ENCODE measurements at regions of chr1 and their contacts with region 1.

Region 1: GRCh38 chr1:167936068-167936929 is at the start of gene DCAF6:
- DNase-seq: peak; percentile 99
- H3K4me3 ChIP-seq: peak within 1 kb of the TSS; percentile 90
- H3K27ac ChIP-seq: peak within 1 kb of the TSS; percentile 89
- H3K4me1 ChIP-seq: peaks cover 22% of the 10 kb centered on the region
- CTCF ChIP-seq: no peak
- total RNA-seq, gene DCAF6: 23.2 and 25.4 TPM in 2 replicates

Region 2: DNA sequence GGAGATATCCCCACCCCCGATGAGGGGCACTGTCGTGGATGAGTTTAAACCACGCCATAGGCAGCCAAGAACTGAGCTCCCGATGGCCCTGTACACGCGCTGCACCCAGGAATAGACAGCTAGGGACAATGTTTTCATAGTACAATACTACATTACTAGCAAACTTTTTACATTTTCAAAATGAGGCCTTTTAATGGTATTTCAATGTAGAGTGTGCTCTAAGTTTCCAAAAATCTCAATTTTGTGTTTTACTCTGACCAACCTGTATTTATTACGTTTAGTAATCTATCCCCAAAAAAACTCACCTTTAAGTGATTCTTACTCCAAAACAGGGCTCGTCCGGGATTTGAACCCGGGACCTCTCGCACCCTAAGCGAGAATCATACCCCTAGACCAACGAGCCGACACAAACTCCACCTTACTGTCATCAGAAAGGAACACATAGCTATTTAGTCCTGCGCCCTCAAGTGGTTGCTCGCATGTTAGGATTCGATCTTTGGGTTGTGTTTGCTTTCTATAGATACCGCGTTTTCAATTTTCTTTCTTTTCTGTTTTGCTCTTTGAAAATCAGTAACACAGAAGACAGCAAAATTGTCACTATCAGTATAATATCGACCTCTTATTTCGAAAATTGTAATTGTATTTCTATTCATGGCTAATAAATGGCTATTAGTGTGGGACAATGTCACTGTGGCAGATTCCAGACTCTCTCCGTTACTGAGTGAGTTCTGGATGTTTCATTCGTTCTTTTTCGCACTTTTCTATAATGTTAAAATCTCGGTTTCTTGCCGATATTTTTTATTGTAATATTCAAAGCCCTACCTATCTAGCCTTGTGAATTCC is 220.9 kb before region 1 on chr1:
- CTCF ChIA-PET with region 1: no interaction called
- POLR2A ChIA-PET with region 1: interaction called, 7 read pairs
- intact Hi-C with region 1: loop called (anchors 2 kb)
- DNase-seq: peak; percentile 94
- H3K4me3 ChIP-seq: peak overlapping the region; percentile 75
- H3K27ac ChIP-seq: peak overlapping the region; percentile 73
- H3K4me1 ChIP-seq: peaks cover 47% of the 10 kb centered on the region
- CTCF ChIP-seq: peak; percentile 94

Region 3: DNA sequence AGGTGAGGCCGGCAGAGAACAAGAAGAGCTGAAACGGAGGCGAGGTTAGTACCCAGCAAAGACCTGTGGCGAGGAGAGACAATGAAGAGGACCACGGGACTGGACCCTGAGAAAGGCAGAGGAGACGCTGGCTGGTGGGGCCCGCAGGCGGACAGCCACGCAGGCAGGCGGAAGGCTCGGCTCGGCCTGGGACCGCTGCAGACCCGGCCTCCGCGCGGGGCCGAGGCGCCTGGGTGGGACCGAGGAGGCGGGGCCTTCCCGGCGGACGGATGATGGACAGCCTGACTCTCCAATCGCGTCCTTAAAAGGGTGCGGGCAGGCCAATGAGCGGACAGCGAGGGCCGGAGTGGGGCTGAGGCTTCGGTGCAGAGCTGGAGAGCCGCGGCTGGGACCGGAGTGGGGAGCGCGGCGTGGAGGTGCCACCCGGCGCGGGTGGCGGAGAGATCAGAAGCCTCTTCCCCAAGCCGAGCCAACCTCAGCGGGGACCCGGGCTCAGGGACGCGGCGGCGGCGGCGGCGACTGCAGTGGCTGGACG is 214.6 kb before region 1 on chr1 and contains the start of gene MPZL1:
- CTCF ChIA-PET with region 1: no interaction called
- POLR2A ChIA-PET with region 1: interaction called, 7 read pairs
- intact Hi-C with region 1: loop called (anchors 2 kb)
- DNase-seq: peak; percentile 95
- H3K4me3 ChIP-seq: peak within 1 kb of the TSS; percentile 94
- H3K27ac ChIP-seq: peak within 1 kb of the TSS; percentile 78
- H3K4me1 ChIP-seq: peaks cover 78% of the 10 kb centered on the region
- CTCF ChIP-seq: no peak
- total RNA-seq, gene MPZL1: 36.2 and 48.9 TPM in 2 replicates

Region 4: GRCh38 chr1:167881069-167881468 is 55.2 kb before region 1 on chr1:
- CTCF ChIA-PET with region 1: no interaction called
- POLR2A ChIA-PET with region 1: no interaction called
- intact Hi-C with region 1: no loop called
- DNase-seq: no peak
- H3K4me3 ChIP-seq: no peak overlapping the region
- H3K27ac ChIP-seq: no peak overlapping the region
- H3K4me1 ChIP-seq: no peaks in the 10 kb centered on the region
- CTCF ChIP-seq: no peak

Region 5: DNA sequence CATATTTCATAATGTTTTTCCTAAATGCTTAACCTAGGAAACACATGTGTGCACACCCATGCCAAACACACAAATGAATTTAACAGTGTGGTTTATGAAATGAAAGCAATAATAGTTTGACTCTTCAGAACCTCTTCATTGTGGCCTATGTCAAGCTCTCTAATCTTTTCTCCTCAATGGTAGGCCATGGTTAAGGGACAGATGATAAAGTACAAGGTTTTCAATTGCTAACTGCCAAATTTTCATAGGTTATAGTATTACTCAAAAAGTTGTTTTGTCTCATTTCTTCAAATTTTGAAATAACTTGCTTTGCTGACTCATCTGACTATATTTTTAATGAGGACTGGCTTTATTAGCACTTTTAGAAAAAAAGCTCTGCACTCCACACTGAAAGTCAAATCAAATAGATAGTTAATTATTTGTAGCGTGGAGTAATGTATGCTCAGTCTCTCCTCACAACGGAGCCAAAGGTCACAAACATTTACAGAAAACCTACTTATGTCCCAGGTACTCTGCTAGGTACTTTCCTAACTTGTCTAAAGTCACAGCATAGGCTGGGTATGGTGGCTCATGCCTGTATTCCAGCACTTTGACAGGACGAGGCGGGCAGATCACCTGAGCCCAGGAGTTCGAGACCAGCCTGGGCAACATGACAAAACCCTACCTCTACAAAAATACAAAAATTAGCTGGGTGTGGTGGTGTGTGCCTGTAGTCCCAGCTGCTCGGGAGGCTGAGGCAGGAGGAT is 19.4 kb before region 1 on chr1:
- CTCF ChIA-PET with region 1: interaction called, 3 read pairs
- POLR2A ChIA-PET with region 1: interaction called, 12 read pairs
- intact Hi-C with region 1: no loop called
- DNase-seq: no peak
- H3K4me3 ChIP-seq: no peak overlapping the region
- H3K27ac ChIP-seq: no peak overlapping the region
- H3K4me1 ChIP-seq: no peaks in the 10 kb centered on the region
- CTCF ChIP-seq: no peak

Region 6: DNA sequence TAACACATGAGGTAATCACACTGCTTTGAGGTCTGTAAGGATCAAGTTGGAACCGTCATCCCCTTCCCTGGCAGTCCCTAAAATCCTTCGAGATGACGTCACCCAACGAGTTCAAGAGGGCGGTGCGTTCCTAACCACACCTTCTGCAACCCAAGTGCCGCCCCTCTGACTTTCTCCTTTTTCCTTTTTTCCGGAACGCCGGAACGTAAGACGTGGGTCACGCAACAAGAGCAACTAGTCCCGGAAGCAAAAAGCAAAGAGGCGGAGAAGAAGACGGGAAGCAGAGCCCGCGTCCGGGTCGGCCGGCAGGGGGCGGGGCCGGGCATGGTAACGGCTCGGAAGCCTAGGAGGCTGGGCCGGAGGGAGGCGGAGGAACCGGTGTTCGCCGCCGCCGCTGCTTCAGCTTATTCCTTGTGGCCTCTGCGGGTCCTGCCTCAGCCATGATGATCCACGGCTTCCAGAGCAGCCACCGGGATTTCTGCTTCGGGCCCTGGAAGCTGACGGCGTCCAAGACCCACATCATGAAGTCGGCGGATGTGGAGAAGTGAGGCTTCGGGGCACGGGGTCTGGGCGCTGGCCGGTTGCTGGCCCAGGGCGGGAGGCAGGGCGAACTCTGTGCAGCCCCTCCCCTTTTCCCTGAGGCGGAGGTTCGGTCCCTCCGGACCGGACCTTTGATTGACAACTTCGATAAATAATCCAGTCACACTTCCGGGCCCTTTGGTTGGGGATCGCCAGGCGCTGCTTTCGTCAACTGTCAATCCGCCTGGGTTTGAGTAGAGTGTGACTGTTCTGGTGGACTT is 242.5 kb after region 1 on chr1 and contains the start of gene TIPRL:
- CTCF ChIA-PET with region 1: no interaction called
- POLR2A ChIA-PET with region 1: no interaction called
- intact Hi-C with region 1: loop called (anchors 2 kb)
- DNase-seq: peak; percentile 95
- H3K4me3 ChIP-seq: peak within 1 kb of the TSS; percentile 82
- H3K27ac ChIP-seq: peak within 1 kb of the TSS; percentile 76
- H3K4me1 ChIP-seq: peaks cover 20% of the 10 kb centered on the region
- CTCF ChIP-seq: peak; percentile 51; the same call in 1 of the 2 replicates
- total RNA-seq, gene TIPRL: 36.0 and 37.8 TPM in 2 replicates

Region 7: GRCh38 chr1:168225476-168226190 is 289.3 kb after region 1 on chr1 and contains the start of gene SFT2D2:
- CTCF ChIA-PET with region 1: no interaction called
- POLR2A ChIA-PET with region 1: interaction called, 3 read pairs
- intact Hi-C with region 1: loop called (anchors 5 kb)
- DNase-seq: peak; percentile 88
- H3K4me3 ChIP-seq: peak within 1 kb of the TSS; percentile 95
- H3K27ac ChIP-seq: peak within 1 kb of the TSS; percentile 47
- H3K4me1 ChIP-seq: peaks cover 42% of the 10 kb centered on the region
- CTCF ChIP-seq: no peak
- total RNA-seq, gene SFT2D2: 20.7 and 22.3 TPM in 2 replicates

Region 8: GRCh38 chr1:168408536-168409242 is 472.4 kb after region 1 on chr1:
- CTCF ChIA-PET with region 1: no interaction called
- POLR2A ChIA-PET with region 1: no interaction called
- intact Hi-C with region 1: no loop called
- DNase-seq: no peak
- H3K4me3 ChIP-seq: no peak overlapping the region
- H3K27ac ChIP-seq: no peak overlapping the region
- H3K4me1 ChIP-seq: no peaks in the 10 kb centered on the region
- CTCF ChIP-seq: no peak